Common myeloid progenitor, CD34-positive (primary cell): ENCODE measurements at regions of chr13 and their contacts with region 1.

Region 1: GRCh38 chr13:95191821-95192563 is 109.3 kb downstream of the ABCC4 start:
- DNase-seq: peak; percentile 72 to 86 (median 81)
- H3K4me3 ChIP-seq: no peak overlapping the region
- H3K27ac ChIP-seq: no peak overlapping the region
- H3K4me1 ChIP-seq: peaks cover 0 to 2% (median 0%) of the 10 kb centered on the region in 4 experiments
- H3K27me3 ChIP-seq: no peaks in the 10 kb centered on the region

Region 2: DNA sequence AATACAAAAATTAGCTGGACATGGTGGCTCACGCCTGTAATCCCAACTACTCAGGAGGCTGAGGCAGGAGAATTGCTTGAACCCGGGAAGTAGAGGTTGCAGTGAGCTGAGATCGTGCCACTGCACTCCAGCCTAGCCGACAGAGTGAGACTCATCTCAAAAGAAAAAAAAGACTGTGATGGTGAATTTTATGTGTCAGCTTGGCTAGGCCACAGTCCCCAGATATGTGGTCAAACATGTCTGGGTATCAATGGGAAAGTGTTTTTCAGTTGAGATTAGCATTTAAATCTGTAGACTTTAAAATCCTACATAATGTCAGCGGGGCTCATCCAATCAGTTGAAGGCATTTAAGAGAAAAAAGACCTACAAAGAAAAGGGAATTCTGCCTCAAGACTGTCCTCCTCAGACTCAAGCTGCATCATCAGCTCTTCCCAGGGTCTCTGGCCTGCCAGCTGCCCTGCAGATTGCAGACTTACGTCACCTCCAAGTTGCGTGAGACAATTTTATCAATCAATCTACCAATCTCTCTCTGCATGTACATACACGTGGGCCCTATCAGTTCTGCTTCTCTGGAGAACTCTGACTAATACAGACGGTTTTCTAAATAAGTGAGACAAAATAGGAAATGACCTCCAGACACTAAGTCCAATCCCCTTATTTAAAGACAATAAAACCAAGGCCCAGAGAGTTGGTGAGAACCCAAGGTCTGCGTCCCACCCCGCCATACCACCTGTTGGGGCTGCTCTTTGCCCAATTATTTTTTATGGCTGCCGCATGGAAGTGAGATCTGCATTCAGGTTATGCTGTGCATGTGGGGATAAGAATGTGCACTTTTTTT is 10.0 kb after region 1 on chr13:
- CTCF ChIA-PET with region 1: interaction called, 14 read pairs
- POLR2A ChIA-PET with region 1: no interaction called
- DNase-seq: peak in 2 of 3 donors; percentile 37 to 50
- H3K4me3 ChIP-seq: no peak overlapping the region
- H3K27ac ChIP-seq: no peak overlapping the region
- H3K4me1 ChIP-seq: peaks cover 2 to 7% (median 5%) of the 10 kb centered on the region in 4 experiments
- H3K27me3 ChIP-seq: no peaks in the 10 kb centered on the region

Region 3: DNA sequence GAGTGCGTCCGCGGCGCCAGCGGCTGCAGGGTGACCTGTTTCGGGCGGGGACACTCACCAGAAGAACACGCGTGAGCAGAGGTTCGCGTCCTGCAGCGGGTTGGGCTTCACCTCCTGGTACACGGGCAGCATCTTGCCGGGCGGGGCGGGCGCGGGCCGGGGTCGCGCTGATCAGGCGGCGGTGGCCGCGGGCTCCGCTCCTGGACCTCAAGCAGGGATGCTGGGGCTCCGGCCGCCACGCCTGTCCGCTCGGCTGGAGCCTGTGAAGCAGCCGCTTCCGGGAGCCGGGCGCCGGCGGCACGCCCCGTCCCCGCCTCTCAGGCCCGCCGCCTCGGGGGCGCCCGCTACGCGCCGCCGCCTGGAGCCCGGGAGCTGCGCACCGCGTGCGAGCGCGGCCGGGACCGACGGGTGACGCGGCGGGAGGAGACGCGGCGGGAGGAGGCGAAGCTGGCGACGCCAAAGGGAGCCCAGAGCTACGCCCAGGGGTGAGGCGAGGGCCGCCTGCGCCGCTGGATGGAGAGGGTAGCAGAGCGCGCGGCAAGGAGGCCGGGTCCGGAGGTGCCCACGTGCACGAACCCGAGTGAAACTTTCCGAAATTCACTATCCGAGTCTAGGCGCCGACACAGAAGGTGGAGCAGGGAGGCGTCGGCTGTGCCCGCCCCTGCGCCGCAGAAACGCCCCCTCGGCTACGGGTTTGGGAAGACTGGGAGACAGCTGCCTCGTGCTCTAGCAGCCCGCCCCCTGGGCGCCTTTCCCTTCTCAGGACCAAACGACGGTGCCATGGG is 109.4 kb after region 1 on chr13 and contains the start of gene ABCC4:
- CTCF ChIA-PET with region 1: interaction called, 298 read pairs
- POLR2A ChIA-PET with region 1: no interaction called
- DNase-seq: peak; percentile 67 to 79 (median 69)
- H3K4me3 ChIP-seq: peak within 1 kb of the TSS; percentile 65 to 87 (median 79)
- H3K27ac ChIP-seq: peak within 1 kb of the TSS in 1 of 2 experiments; percentile 29
- H3K4me1 ChIP-seq: peaks cover 0 to 37% (median 17%) of the 10 kb centered on the region in 4 experiments
- H3K27me3 ChIP-seq: no peaks in the 10 kb centered on the region

Region 4: GRCh38 chr13:95355494-95355893 is 163.5 kb after region 1 on chr13:
- CTCF ChIA-PET with region 1: no interaction called
- POLR2A ChIA-PET with region 1: no interaction called
- DNase-seq: no peak
- H3K4me3 ChIP-seq: no peak overlapping the region
- H3K27ac ChIP-seq: no peak overlapping the region
- H3K4me1 ChIP-seq: no peaks in the 10 kb centered on the region
- H3K27me3 ChIP-seq: no peaks in the 10 kb centered on the region

Region 5: GRCh38 chr13:95387733-95388207 is 195.8 kb after region 1 on chr13:
- CTCF ChIA-PET with region 1: interaction called, 174 read pairs
- POLR2A ChIA-PET with region 1: interaction called, 3 read pairs
- DNase-seq: no peak
- H3K4me3 ChIP-seq: no peak overlapping the region
- H3K27ac ChIP-seq: no peak overlapping the region
- H3K4me1 ChIP-seq: peaks cover 0 to 9% (median under 1%) of the 10 kb centered on the region in 4 experiments
- H3K27me3 ChIP-seq: no peaks in the 10 kb centered on the region

Region 6: DNA sequence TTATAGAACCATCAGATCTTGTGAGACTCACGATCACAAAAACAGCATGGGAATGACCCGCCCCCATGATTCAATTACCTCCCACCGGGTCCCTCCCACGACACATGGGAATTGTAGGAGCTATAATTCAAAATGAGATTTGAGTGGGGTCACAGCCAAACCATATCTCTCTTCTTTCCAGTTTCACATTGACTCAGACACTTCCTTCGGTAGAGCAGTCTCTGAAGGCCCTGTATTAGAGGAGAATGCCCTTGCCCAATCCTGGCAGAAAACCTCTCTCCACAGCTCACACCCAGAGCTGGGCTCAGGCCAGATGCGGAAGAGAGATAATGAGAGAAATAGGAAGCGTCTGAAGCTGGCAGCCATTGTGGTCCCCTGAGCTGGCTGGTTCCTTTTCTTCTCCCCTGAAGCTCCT is 288.1 kb after region 1 on chr13:
- CTCF ChIA-PET with region 1: interaction called, 52 read pairs
- POLR2A ChIA-PET with region 1: no interaction called
- DNase-seq: peak; percentile 93 to 99 (median 98)
- H3K4me3 ChIP-seq: peak overlapping the region in 5 of 7 experiments; percentile 4 to 55 (median 50)
- H3K27ac ChIP-seq: peak overlapping the region; percentile 42 to 58
- H3K4me1 ChIP-seq: peaks cover 7 to 40% (median 26%) of the 10 kb centered on the region in 4 experiments
- H3K27me3 ChIP-seq: no peaks in the 10 kb centered on the region